Activated CD4-positive, alpha-beta memory T cell treated with anti-CD3 and anti-CD28 coated beads for 36 hours (primary cell): ENCODE measurements at regions of chr14 and their contacts with region 1.

Region 1: DNA sequence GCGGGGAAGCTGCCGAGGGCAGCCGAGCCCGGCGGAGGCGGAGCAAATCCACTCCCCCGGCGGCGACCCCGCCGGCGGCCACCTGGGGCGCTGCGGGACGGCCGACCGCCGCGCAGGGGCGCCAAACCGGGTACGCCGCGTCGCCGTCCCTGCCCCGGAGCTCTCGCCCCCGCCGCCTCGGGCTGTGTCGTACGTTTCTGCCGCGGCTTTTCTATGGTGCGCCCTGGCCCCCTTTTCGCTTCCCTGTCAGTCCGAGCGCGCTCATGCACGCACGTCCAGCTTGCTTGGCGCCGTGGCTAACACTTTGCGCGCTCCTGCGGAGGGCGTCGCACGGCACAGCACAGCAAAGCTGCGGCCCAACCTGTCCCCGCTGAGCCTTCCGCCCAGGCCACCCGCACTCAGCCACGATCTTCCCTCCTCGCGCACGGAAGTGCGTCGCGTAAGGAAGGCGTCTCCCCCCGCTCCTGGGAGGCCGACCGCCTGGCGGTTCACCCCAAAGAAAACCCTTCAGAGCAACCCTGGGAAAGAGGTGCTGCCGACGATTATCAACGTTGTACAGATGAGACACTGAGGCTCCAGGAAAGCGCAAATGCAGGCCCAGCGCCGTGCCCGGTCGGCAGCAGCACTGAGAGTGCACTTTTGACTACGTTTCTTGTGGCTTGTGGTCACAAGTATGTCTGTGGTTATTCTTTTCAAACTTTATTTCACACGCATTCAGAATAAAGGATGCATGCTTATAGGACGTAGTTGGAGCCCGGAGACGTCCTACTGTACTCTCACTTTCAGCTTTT is at the start of gene HECTD1:
- DNase-seq: peak; percentile 91
- H3K4me3 Mint-ChIP-seq: peak within 1 kb of the TSS; percentile 94
- H3K27ac Mint-ChIP-seq: peak within 1 kb of the TSS; percentile 100
- H3K4me1 Mint-ChIP-seq: peaks cover 48% of the 10 kb centered on the region
- H3K27me3 Mint-ChIP-seq: no peaks in the 10 kb centered on the region
- total RNA-seq, gene HECTD1: 84.9 to 88.1 TPM

Region 2: DNA sequence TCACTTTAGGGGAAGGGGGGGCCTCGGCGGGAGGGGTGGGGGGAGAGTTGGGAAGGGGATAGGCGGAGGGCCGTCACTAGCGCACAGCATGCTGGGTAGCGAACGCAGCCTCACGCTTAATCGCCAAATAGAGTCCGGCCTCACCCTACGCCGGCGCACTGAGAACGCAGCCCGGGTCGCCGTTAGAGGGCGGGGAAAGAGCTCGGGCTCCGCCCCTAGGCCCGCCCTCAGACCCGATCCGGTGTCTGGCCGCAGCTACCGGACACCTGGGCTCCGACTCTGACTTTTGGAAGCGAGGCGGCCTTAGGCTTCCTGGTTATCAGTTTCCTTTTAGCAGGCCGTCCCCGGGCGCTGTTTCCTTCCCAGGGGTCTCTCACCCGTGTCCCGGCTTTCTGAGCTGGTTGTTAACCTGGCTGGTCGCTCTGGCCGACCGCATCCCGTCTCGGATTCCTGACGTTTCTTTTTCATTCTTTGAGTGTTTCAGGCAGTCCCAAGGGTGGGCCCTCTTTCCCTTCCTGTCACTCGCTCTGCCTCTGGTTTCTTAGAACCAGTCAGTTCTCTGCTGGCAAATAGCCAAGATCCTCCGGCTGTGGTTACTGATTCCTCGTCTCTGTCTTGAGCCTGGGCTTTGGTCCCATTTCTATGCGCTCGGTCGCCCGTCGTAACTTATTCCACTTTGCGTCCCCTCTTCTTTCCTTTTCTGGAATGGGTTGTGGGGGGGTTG is 181.4 kb before region 1 on chr14:
- CTCF ChIA-PET with region 1: interaction called, 3 read pairs
- POLR2A ChIA-PET with region 1: interaction called, 13 read pairs
- intact Hi-C with region 1: loop called (anchors 2 kb)
- DNase-seq: peak; percentile 95
- H3K4me3 Mint-ChIP-seq: peak overlapping the region; percentile 92
- H3K27ac Mint-ChIP-seq: peak overlapping the region; percentile 91
- H3K4me1 Mint-ChIP-seq: peaks cover 56% of the 10 kb centered on the region
- H3K27me3 Mint-ChIP-seq: no peaks in the 10 kb centered on the region

Region 3: DNA sequence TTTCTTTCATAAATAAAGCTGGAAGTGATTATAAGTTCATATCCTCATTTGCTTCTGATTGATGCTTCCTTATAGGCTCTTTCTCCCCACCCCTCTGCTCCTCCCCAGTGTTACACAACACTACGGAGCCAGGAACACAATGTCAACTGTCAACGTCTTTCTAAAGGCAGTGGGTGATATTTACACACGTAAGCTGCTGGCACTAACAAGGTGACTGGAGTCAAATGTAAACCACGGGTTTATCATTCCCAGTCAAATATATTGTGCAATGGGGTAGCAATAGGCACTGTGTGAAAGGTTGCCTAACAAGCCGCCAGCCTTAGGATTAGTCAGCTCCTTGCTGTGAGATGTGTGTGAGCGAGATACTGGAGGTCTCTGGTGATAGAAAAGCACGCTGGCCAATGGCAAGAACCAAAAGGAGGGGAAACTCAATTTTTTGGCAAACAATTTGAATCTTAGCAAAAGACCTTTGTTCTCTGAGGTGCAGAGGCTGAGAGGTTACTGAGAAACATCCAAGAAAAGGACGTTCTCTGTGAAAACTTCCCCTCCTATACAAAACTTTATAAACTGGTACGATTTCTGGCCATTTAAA is 21.8 kb after region 1 on chr14:
- CTCF ChIA-PET with region 1: no interaction called
- POLR2A ChIA-PET with region 1: no interaction called
- intact Hi-C with region 1: no loop called
- DNase-seq: no peak
- H3K4me3 Mint-ChIP-seq: no peak overlapping the region
- H3K27ac Mint-ChIP-seq: no peak overlapping the region
- H3K4me1 Mint-ChIP-seq: no peaks in the 10 kb centered on the region
- H3K27me3 Mint-ChIP-seq: no peaks in the 10 kb centered on the region

Region 4: GRCh38 chr14:31275731-31276130 is 67.8 kb after region 1 on chr14:
- CTCF ChIA-PET with region 1: interaction called, 22 read pairs
- POLR2A ChIA-PET with region 1: interaction called, 14 read pairs
- intact Hi-C with region 1: loop called (anchors 2 kb)
- DNase-seq: no peak
- H3K4me3 Mint-ChIP-seq: no peak overlapping the region
- H3K27ac Mint-ChIP-seq: no peak overlapping the region
- H3K4me1 Mint-ChIP-seq: peaks cover 12% of the 10 kb centered on the region
- H3K27me3 Mint-ChIP-seq: no peaks in the 10 kb centered on the region

Region 5: DNA sequence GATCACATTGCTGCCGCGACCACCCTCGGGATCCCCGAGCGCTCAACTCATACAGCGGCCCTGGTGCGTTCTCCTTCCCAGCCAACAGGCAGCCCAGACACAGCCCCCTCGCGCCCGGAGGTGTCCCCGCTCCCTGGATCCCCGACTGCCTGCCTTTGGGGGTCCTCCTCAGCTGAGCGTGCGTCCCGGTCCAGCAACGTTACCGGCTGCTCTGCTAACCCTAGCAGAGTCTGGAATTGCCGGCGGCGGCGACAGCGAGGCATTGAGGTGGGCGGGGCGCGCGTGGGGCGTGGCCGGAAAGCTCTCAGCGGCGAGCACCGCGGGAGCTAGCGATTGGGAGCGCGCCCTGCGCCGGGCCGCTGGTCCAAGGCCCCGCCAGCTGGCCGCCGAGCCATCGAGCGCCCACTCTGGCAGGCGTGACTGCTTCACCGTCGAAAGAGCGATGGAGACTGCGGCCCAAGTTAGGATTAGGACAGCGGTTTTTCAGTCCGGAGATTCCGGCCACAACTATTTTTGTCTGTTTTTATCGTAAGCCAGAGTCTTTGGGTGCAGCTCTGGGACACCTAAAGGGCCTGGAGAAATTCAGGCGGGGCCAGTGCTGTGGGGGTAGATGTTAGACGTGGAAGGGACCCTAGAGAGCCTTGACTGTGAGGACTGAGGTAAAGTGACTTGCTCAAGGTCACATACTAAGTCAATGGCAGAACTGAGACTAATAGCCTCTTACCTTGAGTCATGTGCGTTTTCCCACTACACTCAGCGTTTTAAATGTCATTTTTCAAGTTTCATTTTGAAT is 212.6 kb after region 1 on chr14 and contains the start of gene HEATR5A:
- CTCF ChIA-PET with region 1: interaction called, 15 read pairs
- POLR2A ChIA-PET with region 1: interaction called, 6 read pairs
- intact Hi-C with region 1: loop called (anchors 1 kb)
- DNase-seq: peak; percentile 94
- H3K4me3 Mint-ChIP-seq: peak within 1 kb of the TSS; percentile 84
- H3K27ac Mint-ChIP-seq: peak within 1 kb of the TSS; percentile 95
- H3K4me1 Mint-ChIP-seq: peaks cover 23% of the 10 kb centered on the region
- H3K27me3 Mint-ChIP-seq: no peaks in the 10 kb centered on the region
- total RNA-seq, gene HEATR5A: 12.8 to 13.0 TPM

Region 6: GRCh38 chr14:31926123-31926522 is 718.2 kb after region 1 on chr14:
- CTCF ChIA-PET with region 1: no interaction called
- POLR2A ChIA-PET with region 1: no interaction called
- intact Hi-C with region 1: loop called (anchors 5 kb)
- DNase-seq: peak; percentile 21
- H3K4me3 Mint-ChIP-seq: no peak overlapping the region
- H3K27ac Mint-ChIP-seq: no peak overlapping the region
- H3K4me1 Mint-ChIP-seq: peaks cover 17% of the 10 kb centered on the region
- H3K27me3 Mint-ChIP-seq: no peaks in the 10 kb centered on the region